Activated naive CD4-positive, alpha-beta T cell treated with anti-CD3 and anti-CD28 coated beads for 36 hours (primary cell): ENCODE measurements at regions of chr18 and their contacts with region 1.

Region 1: DNA sequence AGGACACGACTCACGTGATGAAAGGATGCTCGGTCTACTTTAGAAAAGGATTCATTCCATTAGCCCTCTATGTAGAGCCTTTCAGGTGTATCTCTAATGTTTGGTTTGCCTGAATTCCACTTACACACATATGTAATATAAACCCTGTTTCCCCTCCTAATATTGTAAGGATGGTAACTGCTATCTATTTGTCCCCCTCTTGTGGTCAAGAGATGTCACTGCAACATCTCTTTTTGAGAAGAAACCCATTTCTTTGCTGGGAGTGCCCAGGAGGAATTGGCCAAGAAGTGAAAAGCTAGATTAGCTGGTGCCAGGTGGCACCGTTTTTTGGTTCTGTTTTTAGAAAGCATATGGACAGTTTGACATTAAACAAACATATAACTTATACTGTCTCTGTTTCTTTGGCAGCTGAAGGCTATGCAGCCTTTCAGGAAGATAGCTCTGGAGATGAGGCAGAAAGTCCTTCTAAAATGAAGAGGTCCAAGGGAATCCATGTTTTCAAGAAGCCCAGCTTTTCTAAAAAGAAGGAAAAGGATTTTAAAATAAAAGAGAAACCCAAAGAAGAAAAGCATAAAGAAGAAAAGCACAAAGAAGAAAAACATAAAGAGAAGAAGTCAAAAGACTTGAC is 41.2 kb downstream of the RALBP1 start:
- DNase-seq: peak; percentile 8
- H3K4me3 Mint-ChIP-seq: no peak overlapping the region
- H3K27ac Mint-ChIP-seq: no peak overlapping the region
- H3K4me1 Mint-ChIP-seq: no peaks in the 10 kb centered on the region
- H3K27me3 Mint-ChIP-seq: no peaks in the 10 kb centered on the region

Region 2: DNA sequence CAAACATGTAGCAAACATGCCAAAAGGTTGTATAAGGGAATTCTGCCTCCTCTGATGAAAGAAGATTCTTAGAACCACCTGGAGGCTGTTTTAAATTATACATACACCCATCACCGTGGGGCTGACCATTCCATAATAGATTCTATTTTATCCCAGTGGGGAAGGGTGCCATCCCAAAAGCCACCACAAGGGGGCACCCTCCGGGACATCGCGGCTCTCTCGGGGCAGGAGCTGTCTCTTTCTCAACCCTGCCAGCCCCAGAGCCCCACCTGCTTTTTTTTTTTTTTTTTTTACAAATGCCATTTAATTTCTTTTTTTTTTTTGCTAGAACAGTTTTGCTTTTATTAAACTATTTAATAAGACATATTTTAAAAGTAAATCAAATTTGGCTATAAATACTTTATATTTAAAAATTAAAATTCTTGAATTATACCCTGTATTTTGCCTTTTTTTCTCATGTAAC is 819.8 kb before region 1 on chr18:
- CTCF ChIA-PET with region 1: no interaction called
- intact Hi-C with region 1: loop called (anchors 1 kb)
- DNase-seq: peak; percentile 76
- H3K4me3 Mint-ChIP-seq: no peak overlapping the region
- H3K27ac Mint-ChIP-seq: no peak overlapping the region
- H3K4me1 Mint-ChIP-seq: no peaks in the 10 kb centered on the region
- H3K27me3 Mint-ChIP-seq: peaks cover 8% of the 10 kb centered on the region

Region 3: DNA sequence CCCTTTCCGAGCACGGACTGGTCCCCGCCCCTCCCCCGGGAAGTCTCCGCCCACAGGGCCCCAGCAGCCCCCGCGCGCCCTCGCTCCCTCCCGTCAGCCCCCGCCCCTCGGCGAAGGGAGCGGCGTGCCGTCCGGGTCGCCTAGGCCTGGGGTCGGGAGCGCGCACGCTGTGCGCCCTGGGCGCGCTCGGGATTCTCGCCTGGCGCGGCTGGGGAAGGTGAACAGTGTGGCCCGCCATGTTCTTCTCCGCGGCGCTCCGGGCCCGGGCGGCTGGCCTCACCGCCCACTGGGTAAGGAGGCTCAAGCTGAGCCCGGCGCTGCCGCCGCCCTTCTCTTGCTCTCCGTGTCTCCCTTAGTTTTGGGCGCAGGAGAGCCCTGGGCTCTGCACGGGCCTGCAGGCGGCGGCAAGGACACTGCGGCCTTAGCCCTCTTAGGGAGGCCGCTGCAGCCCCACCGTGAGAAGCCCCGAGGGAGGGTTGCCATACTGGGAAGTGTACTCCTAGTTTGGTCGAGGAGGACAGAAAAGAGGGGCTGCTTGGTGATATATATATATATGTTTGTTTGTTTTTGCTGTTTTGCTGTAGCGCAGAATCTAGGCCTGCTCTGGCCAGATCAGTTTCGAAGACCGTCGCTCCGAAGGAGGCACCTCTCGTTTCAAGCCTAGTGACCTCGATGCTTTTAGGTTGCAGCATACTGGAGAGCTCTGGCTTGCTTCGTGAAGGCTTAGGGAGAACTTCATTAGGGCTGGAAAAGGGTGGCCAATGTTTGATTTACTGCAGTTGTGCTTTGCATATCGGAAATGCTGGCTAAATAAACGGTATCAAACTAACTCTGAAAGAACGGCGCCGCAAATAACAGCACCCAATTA is 413.8 kb before region 1 on chr18 and contains the start of gene NDUFV2:
- CTCF ChIA-PET with region 1: no interaction called
- intact Hi-C with region 1: loop called (anchors 1 kb)
- DNase-seq: peak; percentile 98
- H3K4me3 Mint-ChIP-seq: peak within 1 kb of the TSS; percentile 81
- H3K27ac Mint-ChIP-seq: peak within 1 kb of the TSS; percentile 95
- H3K4me1 Mint-ChIP-seq: peaks cover 43% of the 10 kb centered on the region
- H3K27me3 Mint-ChIP-seq: no peaks in the 10 kb centered on the region
- total RNA-seq, gene NDUFV2: 290 to 303 TPM

Region 4: GRCh38 chr18:9275890-9276289 is 240.7 kb before region 1 on chr18:
- CTCF ChIA-PET with region 1: no interaction called
- intact Hi-C with region 1: loop called (anchors 1 kb)
- DNase-seq: no peak
- H3K4me3 Mint-ChIP-seq: no peak overlapping the region
- H3K27ac Mint-ChIP-seq: no peak overlapping the region
- H3K4me1 Mint-ChIP-seq: no peaks in the 10 kb centered on the region
- H3K27me3 Mint-ChIP-seq: no peaks in the 10 kb centered on the region

Region 5: DNA sequence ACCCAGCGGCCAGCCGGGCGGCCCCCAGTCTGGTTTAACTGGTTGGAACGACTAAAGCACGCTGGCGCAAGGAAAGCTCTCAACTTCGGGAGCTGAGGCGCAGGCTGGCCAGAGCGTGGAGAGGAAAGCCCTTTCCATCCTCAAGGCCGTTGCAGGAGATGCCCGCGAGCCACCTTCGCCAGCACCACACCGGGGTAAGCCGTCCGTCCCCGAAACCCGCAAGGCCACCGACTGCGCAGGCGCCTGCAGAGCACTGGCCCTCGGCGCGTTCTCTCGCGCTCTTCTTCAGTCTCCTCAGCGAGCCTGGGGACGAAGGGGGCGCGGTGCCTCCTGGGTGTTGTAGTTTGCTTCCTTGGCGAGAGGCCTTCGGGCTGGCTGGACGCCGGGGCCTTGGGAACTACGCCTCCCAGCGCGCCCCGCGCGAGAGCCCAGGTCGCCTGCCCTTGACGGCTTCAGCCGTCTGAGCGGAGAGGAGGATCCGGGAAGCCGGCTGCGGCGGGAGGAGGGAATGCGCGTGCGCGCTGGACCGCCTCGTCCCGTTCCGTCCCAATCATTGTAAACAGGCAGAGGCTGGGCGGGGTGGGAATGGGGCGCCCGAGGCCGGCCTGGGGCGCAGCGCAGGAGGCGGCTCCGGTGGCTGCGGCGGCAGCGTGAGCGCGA is 41.4 kb before region 1 on chr18 and contains the start of gene RALBP1:
- CTCF ChIA-PET with region 1: interaction called, 8 read pairs
- intact Hi-C with region 1: loop called (anchors 1 kb)
- DNase-seq: peak; percentile 99
- H3K4me3 Mint-ChIP-seq: peak within 1 kb of the TSS; percentile 89
- H3K27ac Mint-ChIP-seq: peak within 1 kb of the TSS; percentile 90
- H3K4me1 Mint-ChIP-seq: peaks cover 26% of the 10 kb centered on the region
- H3K27me3 Mint-ChIP-seq: peaks cover 3% of the 10 kb centered on the region
- total RNA-seq, gene RALBP1: 46.9 to 51.1 TPM

Region 6: GRCh38 chr18:9782073-9782857 is 265.7 kb after region 1 on chr18:
- CTCF ChIA-PET with region 1: no interaction called
- intact Hi-C with region 1: no loop called
- DNase-seq: no peak
- H3K4me3 Mint-ChIP-seq: no peak overlapping the region
- H3K27ac Mint-ChIP-seq: no peak overlapping the region
- H3K4me1 Mint-ChIP-seq: no peaks in the 10 kb centered on the region
- H3K27me3 Mint-ChIP-seq: peaks cover 8% of the 10 kb centered on the region

Region 7: GRCh38 chr18:9951022-9951859 is 434.7 kb after region 1 on chr18:
- CTCF ChIA-PET with region 1: no interaction called
- intact Hi-C with region 1: no loop called
- DNase-seq: peak; percentile 34
- H3K4me3 Mint-ChIP-seq: no peak overlapping the region
- H3K27ac Mint-ChIP-seq: peak overlapping the region; percentile 54
- H3K4me1 Mint-ChIP-seq: no peaks in the 10 kb centered on the region
- H3K27me3 Mint-ChIP-seq: no peaks in the 10 kb centered on the region